ENCODE measurements at regions of chr22 and their contacts with region 1.

Region 1: GRCh38 chr22:17628304-17629166 is at the start of gene ATP6V1E1:
- DNase-seq: peak; percentile 96 to 97 (median 97)
- ATAC-seq: peak; percentile 100
- H3K4me3 ChIP-seq: peak within 1 kb of the TSS; percentile 79 to 100 (median 93)
- H3K27ac ChIP-seq: peak within 1 kb of the TSS; percentile 77 to 96 (median 92)
- H3K4me1 ChIP-seq: peaks cover 0 to 39% (median 21%) of the 10 kb centered on the region in 12 donors
- H3K27me3 ChIP-seq: no peaks in the 10 kb centered on the region
- CTCF ChIP-seq: no peak
- POLR2A ChIP-seq: peak in 1 of 2 donors; percentile 74
- total RNA-seq, gene ATP6V1E1: 188 to 293 (median 222) TPM

Region 2: DNA sequence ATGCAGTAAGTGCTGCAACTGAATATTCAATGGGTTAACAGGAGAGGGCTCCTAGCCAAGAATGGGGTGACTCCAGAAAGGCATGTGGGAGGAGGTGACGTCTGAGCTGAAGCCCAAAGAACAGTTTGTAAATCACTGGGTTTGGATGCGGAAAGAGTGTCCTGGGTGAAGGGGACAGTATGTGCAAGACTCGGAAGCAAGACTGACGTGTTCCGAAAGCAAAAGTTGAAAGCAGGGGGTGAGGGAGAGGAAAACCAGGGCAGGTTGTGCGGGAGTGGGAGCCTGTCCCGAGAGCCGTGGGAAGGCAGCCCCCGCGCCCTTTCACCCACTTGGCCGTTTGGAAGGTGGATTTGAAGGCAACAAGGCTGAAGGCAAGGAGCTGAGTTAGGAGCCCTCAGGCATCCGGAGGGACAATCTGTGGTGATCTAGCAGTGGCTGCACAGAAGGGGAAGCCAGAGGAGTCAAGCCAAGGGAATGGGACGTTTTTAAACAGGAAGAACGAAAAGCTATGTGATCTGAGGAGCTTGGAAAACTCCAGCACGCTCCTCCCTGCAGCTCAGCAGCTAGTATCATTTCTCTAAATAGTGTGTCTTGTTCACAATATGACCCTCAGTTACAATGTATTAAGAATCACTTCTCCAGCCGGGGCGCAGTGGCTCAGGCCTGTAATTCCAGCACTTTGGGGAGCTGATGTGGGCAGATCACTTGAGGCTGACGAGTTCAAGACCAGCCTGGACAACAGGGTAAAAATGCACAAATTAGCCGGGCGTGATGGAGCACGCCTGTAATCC is 57.5 kb before region 1 on chr22:
- intact Hi-C with region 1: loop called in 3 of 10 experiments (anchors 5 to 10 kb)
- DNase-seq: peak; percentile 70 to 96 (median 83)
- ATAC-seq: peak; percentile 93 to 95 (median 94)
- H3K4me3 ChIP-seq: peak overlapping the region in 10 of 12 donors; percentile 24 to 55 (median 46)
- H3K27ac ChIP-seq: peak overlapping the region; percentile 85 to 98 (median 91)
- H3K4me1 ChIP-seq: peaks cover 13 to 47% (median 23%) of the 10 kb centered on the region in 12 donors
- H3K27me3 ChIP-seq: no peaks in the 10 kb centered on the region
- CTCF ChIP-seq: no peak
- POLR2A ChIP-seq: peak in 1 of 2 donors; percentile 68

Region 3: DNA sequence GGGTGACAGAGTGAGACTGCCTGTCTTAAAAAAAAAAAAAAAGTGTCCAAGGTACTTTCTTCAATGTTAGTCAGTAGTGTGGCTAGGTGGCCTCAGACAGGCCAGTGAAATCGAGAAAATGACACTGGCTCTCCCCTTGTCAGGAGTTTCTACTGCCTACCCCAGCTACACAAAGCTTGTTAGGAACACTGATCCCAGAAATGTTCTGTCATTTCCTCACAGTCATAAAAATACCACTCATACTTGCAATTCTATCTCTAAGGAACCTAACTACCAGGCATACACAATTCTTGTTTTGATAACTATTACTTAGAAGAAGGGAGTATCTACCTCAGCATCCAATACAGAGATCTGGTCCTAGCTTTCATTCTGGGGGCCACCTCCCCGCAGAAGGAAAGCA is 31.3 kb before region 1 on chr22:
- intact Hi-C with region 1: no loop called
- DNase-seq: no peak
- ATAC-seq: no peak
- H3K4me3 ChIP-seq: no peak overlapping the region
- H3K27ac ChIP-seq: peak overlapping the region in 1 of 12 donors; percentile 58
- H3K4me1 ChIP-seq: no peaks in the 10 kb centered on the region
- H3K27me3 ChIP-seq: no peaks in the 10 kb centered on the region
- CTCF ChIP-seq: no peak
- POLR2A ChIP-seq: no peak

Region 4: GRCh38 chr22:17638432-17639246 is 10.1 kb after region 1 on chr22 and contains the start of gene BCL2L13:
- intact Hi-C with region 1: loop called in 1 of 10 experiments (anchors 1 kb)
- DNase-seq: peak; percentile 92 to 96 (median 95)
- ATAC-seq: peak; percentile 95 to 98 (median 98)
- H3K4me3 ChIP-seq: peak within 1 kb of the TSS; percentile 66 to 97 (median 84)
- H3K27ac ChIP-seq: peak within 1 kb of the TSS; percentile 96 to 99 (median 98)
- H3K4me1 ChIP-seq: peaks cover 0 to 26% (median 15%) of the 10 kb centered on the region in 12 donors
- H3K27me3 ChIP-seq: no peaks in the 10 kb centered on the region
- CTCF ChIP-seq: peak in 3 of 12 donors; percentile 4 to 19 (median 10)
- POLR2A ChIP-seq: peak; percentile 93 to 95
- total RNA-seq, gene BCL2L13: 81.9 to 187 (median 89.7) TPM

Region 5: GRCh38 chr22:17684245-17684644 is 55.7 kb after region 1 on chr22:
- intact Hi-C with region 1: loop called in 1 of 10 experiments (anchors 10 kb)
- DNase-seq: no peak
- ATAC-seq: no peak
- H3K4me3 ChIP-seq: no peak overlapping the region
- H3K27ac ChIP-seq: no peak overlapping the region
- H3K4me1 ChIP-seq: peaks cover 0 to 20% (median 4%) of the 10 kb centered on the region in 12 donors
- H3K27me3 ChIP-seq: no peaks in the 10 kb centered on the region
- CTCF ChIP-seq: no peak
- POLR2A ChIP-seq: no peak

Measured in heart left ventricle (tissue), 16 donors.